ENCODE measurements at regions of chr1 and their contacts with region 1.

Region 1: GRCh38 chr1:114558544-114558943 is 22.9 kb downstream of the BCAS2 start:
- DNase-seq: peak in 2 of 9 experiments; percentile 26 to 48
- ATAC-seq: no peak
- H3K4me3 ChIP-seq: no peak overlapping the region
- H3K4me3 Mint-ChIP-seq: no peak overlapping the region
- H3K27ac ChIP-seq: no peak overlapping the region
- H3K27ac Mint-ChIP-seq: no peak overlapping the region
- H3K4me1 ChIP-seq: no peaks in the 10 kb centered on the region
- H3K4me1 Mint-ChIP-seq: no peaks in the 10 kb centered on the region
- H3K27me3 ChIP-seq: no peaks in the 10 kb centered on the region
- H3K27me3 Mint-ChIP-seq: no peaks in the 10 kb centered on the region
- CTCF ChIP-seq: peak; percentile 48

Region 2: DNA sequence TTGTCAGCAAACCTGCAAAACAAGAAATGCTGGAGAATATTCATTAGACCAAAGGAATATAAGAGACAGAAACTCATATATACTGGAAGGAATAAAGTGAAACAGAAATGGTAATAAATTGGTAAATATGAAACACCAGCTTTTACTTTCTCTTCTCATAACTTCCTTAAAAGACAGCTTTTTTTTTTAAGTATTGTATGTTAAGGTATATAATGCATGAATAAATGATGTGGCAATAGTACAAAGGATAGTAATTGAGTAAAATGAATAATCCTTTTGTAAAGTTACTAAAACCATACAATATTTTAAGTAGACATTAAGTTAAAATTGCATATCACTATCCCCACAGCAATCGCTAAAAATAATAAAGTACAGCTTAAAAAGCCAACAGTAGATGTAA is 112.3 kb before region 1 on chr1:
- CTCF ChIA-PET with region 1: no interaction called
- POLR2A ChIA-PET with region 1: no interaction called
- intact Hi-C with region 1: loop called in 1 of 2 experiments (anchors 5 kb)
- DNase-seq: no peak
- ATAC-seq: no peak
- H3K4me3 ChIP-seq: no peak overlapping the region
- H3K4me3 Mint-ChIP-seq: no peak overlapping the region
- H3K27ac ChIP-seq: no peak overlapping the region
- H3K27ac Mint-ChIP-seq: no peak overlapping the region
- H3K4me1 ChIP-seq: no peaks in the 10 kb centered on the region
- H3K4me1 Mint-ChIP-seq: peaks cover 9% of the 10 kb centered on the region
- H3K27me3 ChIP-seq: no peaks in the 10 kb centered on the region
- H3K27me3 Mint-ChIP-seq: no peaks in the 10 kb centered on the region
- CTCF ChIP-seq: no peak

Region 3: DNA sequence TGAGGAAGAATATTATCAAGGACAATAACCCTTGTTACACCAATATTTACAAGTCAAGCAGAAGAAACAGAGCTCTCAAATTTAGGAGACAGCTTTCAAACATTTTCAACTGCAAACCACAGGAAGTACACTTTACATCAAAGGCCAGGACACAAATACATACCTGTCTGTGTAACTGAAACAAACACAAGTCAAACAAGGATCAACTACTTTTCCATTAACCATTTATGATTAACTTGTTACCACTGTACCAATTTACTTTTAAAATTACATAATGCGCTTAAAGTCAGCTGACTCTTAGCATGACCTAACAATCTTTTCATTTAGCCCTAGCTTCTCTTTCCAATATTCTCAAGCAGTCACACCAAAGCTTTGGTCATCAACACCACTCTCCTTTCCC is 91.1 kb before region 1 on chr1:
- CTCF ChIA-PET with region 1: no interaction called
- POLR2A ChIA-PET with region 1: no interaction called
- intact Hi-C with region 1: loop called in 1 of 2 experiments (anchors 10 kb)
- DNase-seq: peak in 2 of 9 experiments; percentile 17 to 36
- ATAC-seq: peak; percentile 54
- H3K4me3 ChIP-seq: no peak overlapping the region
- H3K4me3 Mint-ChIP-seq: peak overlapping the region; percentile 57
- H3K27ac ChIP-seq: no peak overlapping the region
- H3K27ac Mint-ChIP-seq: peak overlapping the region; percentile 68
- H3K4me1 ChIP-seq: peaks cover 32% of the 10 kb centered on the region
- H3K4me1 Mint-ChIP-seq: peaks cover 60% of the 10 kb centered on the region
- H3K27me3 ChIP-seq: no peaks in the 10 kb centered on the region
- H3K27me3 Mint-ChIP-seq: no peaks in the 10 kb centered on the region
- CTCF ChIP-seq: no peak

Measured in CD8-positive, alpha-beta T cell (primary cell).